Endothelial cell of umbilical vein (primary cell): ENCODE measurements at regions of chr15 and their contacts with region 1.

Region 1: DNA sequence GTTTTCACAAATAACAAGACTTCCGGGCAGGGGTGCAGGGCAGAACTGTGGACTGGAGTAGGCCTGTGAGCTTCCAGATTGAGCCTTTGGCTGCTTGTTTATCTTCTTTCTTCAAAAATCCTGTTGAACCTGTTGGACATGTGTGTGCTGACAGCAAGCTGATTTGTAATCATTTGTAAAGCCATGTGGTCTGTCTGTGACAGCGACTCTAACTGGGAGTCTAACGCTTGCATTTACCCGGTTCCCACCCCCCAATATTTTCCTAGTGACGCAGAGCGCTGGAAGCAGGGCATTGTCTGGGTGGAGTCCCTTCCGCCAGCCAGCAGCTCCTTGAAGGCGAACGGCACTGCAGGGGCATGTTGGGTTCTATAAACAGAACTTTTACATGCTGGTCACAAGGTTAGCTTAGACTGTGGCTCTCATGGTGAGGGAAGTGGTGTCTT is 85.7 kb upstream of the MYZAP start:
- DNase-seq: peak; percentile 92
- H3K4me3 ChIP-seq: no peak overlapping the region
- H3K27ac ChIP-seq: peak overlapping the region; percentile 83
- H3K4me1 ChIP-seq: peaks cover 36% of the 10 kb centered on the region
- H3K27me3 ChIP-seq: no peaks in the 10 kb centered on the region
- CTCF ChIP-seq: no peak
- POLR2A ChIP-seq: peak; percentile 18

Region 2: DNA sequence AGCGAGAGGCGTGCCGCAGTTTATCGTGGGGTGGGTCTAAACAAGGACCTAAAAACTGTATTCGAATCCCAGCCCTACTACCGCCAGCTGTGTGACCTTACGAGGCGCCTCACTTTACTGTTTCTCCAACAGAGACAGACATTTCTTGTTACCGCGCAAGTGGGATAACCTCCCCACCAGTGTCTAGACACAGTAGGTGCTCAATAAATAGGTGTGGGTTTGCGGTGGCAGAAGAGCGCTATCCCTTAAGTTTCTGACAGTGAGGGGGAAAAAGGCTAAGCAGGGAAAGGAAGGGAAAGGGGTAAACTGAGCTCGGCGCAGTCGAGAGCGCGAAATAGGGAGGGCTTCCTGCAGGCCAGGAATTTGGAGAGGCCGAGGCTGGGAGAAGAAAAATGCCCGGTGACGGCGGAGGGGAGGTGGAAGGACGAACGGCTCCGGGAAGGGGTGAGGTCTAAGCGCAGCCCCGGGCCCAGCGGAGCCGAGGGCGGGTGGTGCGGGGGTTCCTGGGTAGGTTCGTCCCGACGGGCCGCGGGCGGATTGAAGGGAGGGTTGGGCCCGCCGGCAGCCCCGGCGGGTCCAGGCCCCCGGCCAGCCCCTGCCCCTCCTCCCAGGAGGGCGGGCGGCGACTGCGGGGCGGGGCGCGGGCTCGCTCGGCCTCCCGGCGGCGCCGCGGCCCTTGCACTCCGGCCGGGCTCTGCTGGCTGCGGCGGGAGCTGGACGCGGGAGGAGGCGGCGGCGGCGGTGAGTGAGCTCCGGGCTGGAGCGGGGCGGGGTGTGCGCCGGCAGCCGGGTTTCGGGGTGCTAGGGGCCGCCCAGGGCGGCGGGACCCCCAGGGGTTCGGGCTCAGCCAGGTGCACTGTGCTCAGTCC is 129.9 kb before region 1 on chr15 and contains the start of gene CGNL1:
- CTCF ChIA-PET with region 1: interaction called, 5 read pairs
- POLR2A ChIA-PET with region 1: no interaction called
- dilution Hi-C with region 1: no loop called
- intact Hi-C with region 1: loop called (anchors 5 kb)
- DNase-seq: peak; percentile 49
- H3K4me3 ChIP-seq: peak within 1 kb of the TSS; percentile 15 to 87 (median 53)
- H3K27ac ChIP-seq: peak within 1 kb of the TSS; percentile 2
- H3K4me1 ChIP-seq: peaks cover 25% of the 10 kb centered on the region
- H3K27me3 ChIP-seq: peaks cover 0 to 3% of the 10 kb centered on the region in 2 experiments
- CTCF ChIP-seq: no peak
- POLR2A ChIP-seq: peak; percentile 66
- total RNA-seq, gene CGNL1: 25.7 and 27.1 TPM in 2 replicates

Region 3: GRCh38 chr15:57462381-57462780 is 43.6 kb before region 1 on chr15:
- CTCF ChIA-PET with region 1: interaction called, 3 read pairs
- POLR2A ChIA-PET with region 1: no interaction called
- dilution Hi-C with region 1: no loop called
- intact Hi-C with region 1: loop called (anchors 5 kb)
- DNase-seq: peak; percentile 52
- H3K4me3 ChIP-seq: no peak overlapping the region
- H3K27ac ChIP-seq: no peak overlapping the region
- H3K4me1 ChIP-seq: peaks cover 29% of the 10 kb centered on the region
- H3K27me3 ChIP-seq: no peaks in the 10 kb centered on the region
- CTCF ChIP-seq: no peak
- POLR2A ChIP-seq: no peak

Region 4: DNA sequence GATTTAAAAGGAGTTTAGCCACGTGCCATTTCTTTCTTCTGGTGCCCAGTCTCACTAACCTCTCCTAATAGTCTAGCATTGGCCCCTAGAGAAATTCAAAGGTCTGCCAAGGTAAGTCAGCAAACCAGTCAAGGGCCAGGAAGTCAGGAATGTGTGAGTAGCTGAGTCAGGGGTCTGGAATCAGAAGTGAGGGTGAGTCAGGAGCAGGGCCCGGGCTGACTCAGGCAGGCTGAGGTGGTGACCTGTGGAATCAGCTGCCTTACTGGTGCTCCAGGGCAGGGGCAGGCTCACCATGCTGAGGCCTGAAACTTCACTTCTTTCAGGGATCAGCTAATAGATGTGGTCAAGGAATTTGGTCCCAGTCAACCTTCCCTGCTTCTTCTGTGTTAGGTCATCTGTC is 20.1 kb before region 1 on chr15:
- CTCF ChIA-PET with region 1: interaction called, 4 read pairs
- POLR2A ChIA-PET with region 1: no interaction called
- dilution Hi-C with region 1: no loop called
- intact Hi-C with region 1: loop called (anchors 2 kb)
- DNase-seq: peak; percentile 82
- H3K4me3 ChIP-seq: no peak overlapping the region
- H3K27ac ChIP-seq: peak overlapping the region; percentile 56
- H3K4me1 ChIP-seq: peaks cover 22% of the 10 kb centered on the region
- H3K27me3 ChIP-seq: no peaks in the 10 kb centered on the region
- CTCF ChIP-seq: no peak
- POLR2A ChIP-seq: no peak

Region 5: GRCh38 chr15:57495041-57495440 is 10.9 kb before region 1 on chr15:
- CTCF ChIA-PET with region 1: interaction called, 10 read pairs
- POLR2A ChIA-PET with region 1: no interaction called
- dilution Hi-C with region 1: no loop called
- intact Hi-C with region 1: no loop called
- DNase-seq: no peak
- H3K4me3 ChIP-seq: no peak overlapping the region
- H3K27ac ChIP-seq: no peak overlapping the region
- H3K4me1 ChIP-seq: peaks cover 5% of the 10 kb centered on the region
- H3K27me3 ChIP-seq: no peaks in the 10 kb centered on the region
- CTCF ChIP-seq: no peak
- POLR2A ChIP-seq: no peak